ENCODE measurements at regions of chr6 and their contacts with region 1.

Region 1: GRCh38 chr6:79813854-79814709 is 133.3 kb downstream of the ELOVL4 start:
- DNase-seq: peak; percentile 87
- ATAC-seq: peak; percentile 76
- H3K4me3 Mint-ChIP-seq: no peak overlapping the region
- H3K27ac Mint-ChIP-seq: no peak overlapping the region
- H3K4me1 Mint-ChIP-seq: peaks cover 2% of the 10 kb centered on the region
- H3K27me3 Mint-ChIP-seq: no peaks in the 10 kb centered on the region
- CTCF ChIP-seq: peak; percentile 68

Region 2: DNA sequence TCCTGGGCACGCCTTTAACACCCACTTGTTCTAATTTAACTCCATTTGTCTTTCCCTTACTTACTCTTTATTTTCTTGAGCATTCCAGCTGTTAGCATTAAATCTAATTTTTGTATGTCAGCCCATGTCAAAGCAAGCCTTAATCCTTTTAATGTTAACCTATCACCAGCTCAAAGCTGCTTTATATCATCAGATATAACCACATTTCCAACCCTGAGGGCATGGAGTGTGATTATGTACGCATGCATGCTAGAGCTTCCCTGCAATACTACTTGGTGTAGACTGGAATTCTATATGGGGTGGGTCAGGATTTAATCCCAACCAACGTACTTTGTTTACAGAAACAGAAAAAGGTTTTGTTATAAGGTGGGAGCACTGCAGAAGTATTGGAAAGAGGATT is 440.2 kb before region 1 on chr6:
- CTCF ChIA-PET with region 1: no interaction called
- POLR2A ChIA-PET with region 1: no interaction called
- intact Hi-C with region 1: no loop called
- DNase-seq: no peak
- ATAC-seq: no peak
- H3K4me3 Mint-ChIP-seq: no peak overlapping the region
- H3K27ac Mint-ChIP-seq: no peak overlapping the region
- H3K4me1 Mint-ChIP-seq: no peaks in the 10 kb centered on the region
- H3K27me3 Mint-ChIP-seq: peaks cover 2% of the 10 kb centered on the region
- CTCF ChIP-seq: no peak

Region 3: DNA sequence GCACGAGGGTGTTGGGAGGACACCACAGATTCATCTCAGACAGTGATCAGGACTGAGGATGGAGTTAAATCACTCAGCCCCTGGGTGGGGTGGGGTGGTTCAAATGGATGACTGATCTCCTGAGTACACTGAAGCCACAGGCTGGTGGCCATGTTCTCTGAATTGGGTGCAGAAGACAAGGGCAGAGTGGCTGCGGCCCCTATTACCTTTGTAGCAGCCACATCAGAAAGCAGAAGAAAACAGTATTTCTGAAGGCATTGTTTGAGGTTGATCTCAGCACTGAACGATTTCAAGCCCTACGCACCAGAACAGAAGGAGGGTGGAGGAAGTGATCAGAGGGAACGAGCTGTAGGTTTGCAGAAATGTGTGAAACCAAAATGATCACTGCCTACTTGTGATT is 111.4 kb before region 1 on chr6:
- CTCF ChIA-PET with region 1: no interaction called
- POLR2A ChIA-PET with region 1: no interaction called
- intact Hi-C with region 1: no loop called
- DNase-seq: peak; percentile 37
- ATAC-seq: peak; percentile 83
- H3K4me3 Mint-ChIP-seq: no peak overlapping the region
- H3K27ac Mint-ChIP-seq: peak overlapping the region; percentile 5
- H3K4me1 Mint-ChIP-seq: peaks cover 6% of the 10 kb centered on the region
- H3K27me3 Mint-ChIP-seq: no peaks in the 10 kb centered on the region
- CTCF ChIP-seq: no peak

Region 4: GRCh38 chr6:79713701-79714322 is 100.3 kb before region 1 on chr6:
- CTCF ChIA-PET with region 1: no interaction called
- POLR2A ChIA-PET with region 1: no interaction called
- intact Hi-C with region 1: no loop called
- DNase-seq: peak; percentile 73
- ATAC-seq: peak; percentile 61
- H3K4me3 Mint-ChIP-seq: no peak overlapping the region
- H3K27ac Mint-ChIP-seq: no peak overlapping the region
- H3K4me1 Mint-ChIP-seq: no peaks in the 10 kb centered on the region
- H3K27me3 Mint-ChIP-seq: peaks cover 3% of the 10 kb centered on the region
- CTCF ChIP-seq: peak; percentile 78

Region 5: GRCh38 chr6:79724816-79725215 is 89.3 kb before region 1 on chr6:
- CTCF ChIA-PET with region 1: no interaction called
- POLR2A ChIA-PET with region 1: no interaction called
- intact Hi-C with region 1: no loop called
- DNase-seq: no peak
- ATAC-seq: no peak
- H3K4me3 Mint-ChIP-seq: no peak overlapping the region
- H3K27ac Mint-ChIP-seq: no peak overlapping the region
- H3K4me1 Mint-ChIP-seq: no peaks in the 10 kb centered on the region
- H3K27me3 Mint-ChIP-seq: peaks cover 18% of the 10 kb centered on the region
- CTCF ChIP-seq: no peak

Region 6: GRCh38 chr6:79777713-79778579 is 36.1 kb before region 1 on chr6:
- CTCF ChIA-PET with region 1: interaction called, 19 read pairs
- POLR2A ChIA-PET with region 1: no interaction called
- intact Hi-C with region 1: loop called (anchors 1 kb)
- DNase-seq: peak; percentile 92
- ATAC-seq: peak; percentile 93
- H3K4me3 Mint-ChIP-seq: peak overlapping the region; percentile 69
- H3K27ac Mint-ChIP-seq: peak overlapping the region; percentile 80
- H3K4me1 Mint-ChIP-seq: peaks cover 10% of the 10 kb centered on the region
- H3K27me3 Mint-ChIP-seq: peaks cover 2% of the 10 kb centered on the region
- CTCF ChIP-seq: peak; percentile 92

Region 7: GRCh38 chr6:79789843-79790242 is 24.2 kb before region 1 on chr6:
- CTCF ChIA-PET with region 1: interaction called, 15 read pairs
- POLR2A ChIA-PET with region 1: no interaction called
- intact Hi-C with region 1: no loop called
- DNase-seq: no peak
- ATAC-seq: no peak
- H3K4me3 Mint-ChIP-seq: no peak overlapping the region
- H3K27ac Mint-ChIP-seq: no peak overlapping the region
- H3K4me1 Mint-ChIP-seq: no peaks in the 10 kb centered on the region
- H3K27me3 Mint-ChIP-seq: peaks cover 6% of the 10 kb centered on the region
- CTCF ChIP-seq: no peak

Region 8: DNA sequence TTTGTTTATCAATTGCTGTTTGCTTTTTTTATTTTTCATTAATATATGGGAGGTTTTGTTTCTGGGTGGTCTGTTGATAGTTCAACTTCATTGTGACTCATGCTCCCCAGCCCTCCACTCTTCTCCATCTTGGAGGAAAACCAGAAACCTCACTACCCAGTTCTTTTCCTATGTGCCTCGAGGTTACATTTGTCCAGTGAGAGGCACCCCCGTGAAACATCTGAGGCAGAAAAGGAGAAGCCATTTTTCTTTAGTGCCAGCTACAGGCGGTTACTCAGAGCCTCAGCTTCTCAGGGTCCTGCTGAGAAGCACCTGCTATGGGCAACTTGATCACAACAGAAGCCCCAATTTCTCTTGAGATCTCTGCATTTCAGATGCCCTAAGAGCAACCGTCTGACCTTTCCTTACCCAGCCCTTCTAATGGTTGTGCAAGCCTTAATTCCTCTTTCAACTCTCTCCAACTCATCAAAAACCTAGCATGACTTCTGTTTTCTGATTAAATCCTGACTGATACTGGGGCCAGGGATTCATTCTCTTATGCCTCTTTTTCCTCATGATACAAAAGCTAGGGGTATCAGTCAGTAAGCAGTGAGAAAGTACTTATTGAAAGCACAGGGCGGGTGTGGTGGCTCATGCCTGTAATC is 11.3 kb before region 1 on chr6:
- CTCF ChIA-PET with region 1: interaction called, 12 read pairs
- POLR2A ChIA-PET with region 1: no interaction called
- intact Hi-C with region 1: no loop called
- DNase-seq: no peak
- ATAC-seq: no peak
- H3K4me3 Mint-ChIP-seq: no peak overlapping the region
- H3K27ac Mint-ChIP-seq: no peak overlapping the region
- H3K4me1 Mint-ChIP-seq: peaks cover 10% of the 10 kb centered on the region
- H3K27me3 Mint-ChIP-seq: peaks cover 8% of the 10 kb centered on the region
- CTCF ChIP-seq: no peak

Region 9: DNA sequence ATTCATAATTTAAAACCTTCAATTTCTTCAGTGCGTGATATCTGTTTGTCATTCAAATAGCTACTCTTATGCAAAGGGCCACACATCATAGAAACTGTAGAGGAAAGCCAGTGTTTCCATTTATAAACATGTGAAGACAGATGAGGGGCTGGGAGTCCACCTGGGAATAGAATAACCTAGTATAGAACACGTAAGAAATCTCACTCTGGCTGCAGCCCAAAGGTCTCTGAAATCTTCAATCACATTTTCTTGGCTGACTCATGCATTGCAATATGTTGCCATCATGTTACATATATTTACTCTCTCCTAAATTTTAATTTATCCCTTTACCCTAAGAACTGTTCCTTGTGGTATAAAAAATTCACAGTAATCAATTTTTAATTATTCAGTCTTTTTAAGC is 10.1 kb after region 1 on chr6:
- CTCF ChIA-PET with region 1: interaction called, 18 read pairs
- POLR2A ChIA-PET with region 1: no interaction called
- intact Hi-C with region 1: no loop called
- DNase-seq: no peak
- ATAC-seq: no peak
- H3K4me3 Mint-ChIP-seq: no peak overlapping the region
- H3K27ac Mint-ChIP-seq: no peak overlapping the region
- H3K4me1 Mint-ChIP-seq: no peaks in the 10 kb centered on the region
- H3K27me3 Mint-ChIP-seq: peaks cover 6% of the 10 kb centered on the region
- CTCF ChIP-seq: no peak

Region 10: GRCh38 chr6:79833264-79833963 is 19.3 kb after region 1 on chr6:
- CTCF ChIA-PET with region 1: interaction called, 10 read pairs
- POLR2A ChIA-PET with region 1: no interaction called
- intact Hi-C with region 1: no loop called
- DNase-seq: no peak
- ATAC-seq: no peak
- H3K4me3 Mint-ChIP-seq: no peak overlapping the region
- H3K27ac Mint-ChIP-seq: no peak overlapping the region
- H3K4me1 Mint-ChIP-seq: no peaks in the 10 kb centered on the region
- H3K27me3 Mint-ChIP-seq: peaks cover 15% of the 10 kb centered on the region
- CTCF ChIP-seq: no peak

Region 11: DNA sequence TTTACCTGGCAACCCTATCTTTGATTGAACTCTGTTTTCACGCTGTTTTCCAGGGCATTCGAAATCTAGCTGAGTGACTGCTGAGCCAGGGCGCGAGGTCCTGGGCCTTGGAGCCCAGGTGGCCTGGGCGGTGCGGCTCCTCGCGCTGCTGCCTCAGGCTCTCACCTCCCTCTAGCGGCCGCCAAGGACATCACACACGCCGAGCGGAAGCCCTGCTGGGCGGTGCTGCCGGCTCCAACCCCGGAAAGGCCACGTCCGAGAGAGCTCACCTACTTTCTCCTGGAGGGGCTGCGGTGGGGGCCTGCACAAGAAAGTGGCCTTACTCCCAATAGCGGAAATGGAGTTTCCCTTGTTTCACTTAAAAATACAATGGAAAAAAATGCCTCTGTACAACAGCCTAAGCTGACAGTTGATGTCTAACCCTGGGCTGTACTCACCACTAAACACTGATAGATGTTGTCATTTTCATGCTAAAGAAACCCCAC is 55.6 kb after region 1 on chr6:
- CTCF ChIA-PET with region 1: interaction called, 24 read pairs
- POLR2A ChIA-PET with region 1: no interaction called
- intact Hi-C with region 1: no loop called
- DNase-seq: peak; percentile 84
- ATAC-seq: peak; percentile 100
- H3K4me3 Mint-ChIP-seq: peak overlapping the region; percentile 12
- H3K27ac Mint-ChIP-seq: peak overlapping the region; percentile 47
- H3K4me1 Mint-ChIP-seq: peaks cover 9% of the 10 kb centered on the region
- H3K27me3 Mint-ChIP-seq: peaks cover 4% of the 10 kb centered on the region
- CTCF ChIP-seq: peak; percentile 79